ENCODE measurements at regions of chr6 and their contacts with region 1.

Region 1: DNA sequence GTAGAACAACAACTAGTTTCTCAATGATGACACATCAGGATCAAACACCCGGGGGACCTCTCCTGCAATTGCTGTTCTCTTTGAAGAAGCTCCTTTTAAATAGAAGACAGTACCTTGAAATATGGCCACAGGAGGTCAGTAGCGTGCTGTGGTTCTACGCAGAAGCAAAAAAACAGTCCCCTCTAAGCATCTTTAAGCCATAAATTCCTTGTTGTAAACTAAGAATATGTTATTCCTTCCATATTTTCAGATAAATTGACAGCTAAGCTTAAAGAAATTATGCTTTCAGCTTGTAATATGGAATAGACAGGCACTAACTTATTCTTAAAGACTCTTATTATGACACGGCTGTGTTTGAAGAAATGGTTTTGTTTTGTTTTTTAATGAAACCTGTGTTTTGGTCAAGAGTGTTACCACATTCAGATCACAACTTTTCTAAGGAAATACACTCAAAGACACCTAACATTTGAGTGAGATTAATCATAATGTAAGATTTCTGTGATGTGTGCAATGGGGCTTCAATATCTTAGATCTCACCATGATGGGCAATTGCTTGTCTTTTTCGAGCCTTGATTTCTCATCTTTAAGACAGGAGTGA is 49.7 kb upstream of the IL20RA start:
- DNase-seq: peak in 2 of 3 donors; percentile 30 to 86
- ATAC-seq: peak; percentile 64
- H3K4me3 ChIP-seq: no peak overlapping the region
- H3K4me1 ChIP-seq: peaks cover 9% of the 10 kb centered on the region
- CTCF ChIP-seq: peak; percentile 38

Region 2: DNA sequence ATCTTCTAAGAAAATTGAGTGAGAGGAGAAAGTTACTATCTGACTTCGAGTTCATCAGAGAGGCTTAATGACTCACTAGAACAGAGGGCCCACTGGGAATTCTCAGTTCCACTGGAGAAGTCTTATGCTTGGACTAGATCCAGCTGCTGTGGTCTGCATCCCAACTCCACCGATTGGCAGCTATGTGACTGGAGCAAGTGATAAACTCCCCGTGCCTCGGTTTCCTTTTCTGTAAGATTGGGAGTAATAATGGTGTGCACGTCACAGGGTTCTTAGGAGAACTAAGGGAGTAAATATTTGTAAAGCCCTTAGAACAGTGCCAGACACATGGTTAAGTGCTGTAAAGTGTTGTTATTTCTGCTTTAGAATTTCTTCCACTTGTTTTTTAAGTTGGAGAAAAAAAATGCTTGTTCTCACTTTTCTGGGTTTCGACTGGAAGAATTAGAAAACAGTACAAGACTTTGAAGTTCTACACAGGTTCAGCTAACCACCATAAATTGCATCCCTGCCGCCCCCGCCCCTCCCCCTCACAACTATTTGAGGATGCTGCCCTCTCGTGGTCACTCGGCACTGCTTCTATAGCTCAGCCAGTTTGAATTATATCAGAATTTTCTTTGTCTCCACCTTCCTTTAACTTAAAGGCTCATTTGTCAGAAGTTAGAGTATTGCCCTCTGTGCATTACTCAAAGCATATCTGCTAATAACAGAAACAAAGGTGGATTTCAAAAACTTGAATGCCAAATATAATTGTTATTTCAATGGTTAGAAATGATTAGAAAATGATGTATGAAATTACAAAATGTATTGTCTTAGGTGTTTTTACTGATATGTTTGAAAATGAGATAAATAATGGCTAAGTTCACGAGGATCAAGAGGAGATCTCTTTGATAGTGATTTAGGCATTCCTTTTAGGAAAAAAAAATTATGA is 219.7 kb after region 1 on chr6:
- intact Hi-C with region 1: loop called (anchors 10 kb)
- DNase-seq: peak; percentile 59 to 82 (median 69)
- ATAC-seq: peak; percentile 84
- H3K4me3 ChIP-seq: no peak overlapping the region
- H3K4me1 ChIP-seq: no peaks in the 10 kb centered on the region
- CTCF ChIP-seq: peak; percentile 56

Region 3: GRCh38 chr6:137414599-137414998 is 320.1 kb after region 1 on chr6:
- intact Hi-C with region 1: no loop called
- DNase-seq: no peak
- ATAC-seq: peak; percentile 30
- H3K4me3 ChIP-seq: no peak overlapping the region
- H3K4me1 ChIP-seq: peaks cover 5% of the 10 kb centered on the region
- CTCF ChIP-seq: no peak

Region 4: GRCh38 chr6:137641474-137642077 is 547.1 kb after region 1 on chr6:
- intact Hi-C with region 1: loop called (anchors 10 kb)
- DNase-seq: peak in 2 of 3 donors; percentile 42 to 82
- ATAC-seq: peak; percentile 95
- H3K4me3 ChIP-seq: no peak overlapping the region
- H3K4me1 ChIP-seq: peaks cover 3% of the 10 kb centered on the region
- CTCF ChIP-seq: no peak